IMR-90 (cell line): ENCODE measurements at regions of chr17 and their contacts with region 1.

Region 1: DNA sequence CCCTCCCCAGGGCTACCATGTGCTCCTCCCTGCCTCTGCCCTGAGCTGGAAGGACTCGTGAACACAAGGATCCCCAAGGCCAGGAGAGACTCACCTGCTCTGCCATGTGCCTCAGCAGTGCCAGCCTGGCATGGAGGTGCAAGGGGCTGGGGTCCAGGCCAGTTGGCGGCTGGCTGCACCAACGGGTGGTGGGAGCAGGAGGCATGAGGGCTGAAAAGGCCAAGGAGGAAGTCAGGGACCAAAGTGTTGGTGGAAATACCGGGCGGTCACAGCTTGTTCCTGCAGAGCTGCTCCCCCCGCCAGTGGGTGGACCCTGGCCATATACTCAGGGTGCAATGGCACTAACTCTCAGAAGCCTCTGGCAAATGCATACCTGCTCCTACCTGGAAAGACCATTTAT is 7.4 kb upstream of the MRPL38 start:
- DNase-seq: no peak
- ATAC-seq: no peak
- H3K4me3 ChIP-seq: no peak overlapping the region
- H3K27ac ChIP-seq: no peak overlapping the region
- H3K4me1 ChIP-seq: no peaks in the 10 kb centered on the region
- H3K27me3 ChIP-seq: no peaks in the 10 kb centered on the region
- CTCF ChIP-seq: no peak
- POLR2A ChIP-seq: no peak
- RAD21 ChIP-seq: no peak

Region 2: DNA sequence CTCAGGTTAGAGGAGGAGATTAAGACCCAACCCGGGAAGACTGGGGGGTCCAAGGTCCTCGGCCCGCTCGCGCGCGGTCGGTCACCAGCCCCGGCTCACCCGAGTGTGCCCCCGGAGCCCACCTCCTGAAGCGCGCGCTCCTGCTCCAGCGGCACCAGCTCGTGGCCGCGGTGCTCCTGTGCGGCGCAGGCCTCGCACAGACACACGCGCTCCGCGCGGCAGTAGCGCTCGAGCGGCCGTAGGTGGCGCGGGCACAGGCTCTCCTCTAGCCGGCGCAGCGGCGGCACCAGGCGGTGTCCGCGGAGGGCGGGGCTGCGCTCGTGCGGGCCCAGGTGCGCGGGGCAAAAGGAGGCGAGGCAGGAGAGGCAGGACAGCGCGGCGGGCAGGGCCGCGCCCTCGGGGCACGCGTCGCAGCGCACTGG is 34.3 kb before region 1 on chr17:
- CTCF ChIA-PET with region 1: no interaction called
- POLR2A ChIA-PET with region 1: no interaction called
- dilution Hi-C with region 1: no loop called
- in situ Hi-C with region 1: no loop called
- intact Hi-C with region 1: no loop called
- DNase-seq: peak; percentile 71
- ATAC-seq: peak; percentile 74
- H3K4me3 ChIP-seq: peak overlapping the region; percentile 46
- H3K27ac ChIP-seq: peak overlapping the region; percentile 75
- H3K4me1 ChIP-seq: peaks cover 21% of the 10 kb centered on the region
- H3K27me3 ChIP-seq: peaks cover 3% of the 10 kb centered on the region
- CTCF ChIP-seq: peak; percentile 60
- POLR2A ChIP-seq: peak; percentile 32; the same call in 1 of the 2 replicates
- RAD21 ChIP-seq: peak; percentile 30

Region 3: DNA sequence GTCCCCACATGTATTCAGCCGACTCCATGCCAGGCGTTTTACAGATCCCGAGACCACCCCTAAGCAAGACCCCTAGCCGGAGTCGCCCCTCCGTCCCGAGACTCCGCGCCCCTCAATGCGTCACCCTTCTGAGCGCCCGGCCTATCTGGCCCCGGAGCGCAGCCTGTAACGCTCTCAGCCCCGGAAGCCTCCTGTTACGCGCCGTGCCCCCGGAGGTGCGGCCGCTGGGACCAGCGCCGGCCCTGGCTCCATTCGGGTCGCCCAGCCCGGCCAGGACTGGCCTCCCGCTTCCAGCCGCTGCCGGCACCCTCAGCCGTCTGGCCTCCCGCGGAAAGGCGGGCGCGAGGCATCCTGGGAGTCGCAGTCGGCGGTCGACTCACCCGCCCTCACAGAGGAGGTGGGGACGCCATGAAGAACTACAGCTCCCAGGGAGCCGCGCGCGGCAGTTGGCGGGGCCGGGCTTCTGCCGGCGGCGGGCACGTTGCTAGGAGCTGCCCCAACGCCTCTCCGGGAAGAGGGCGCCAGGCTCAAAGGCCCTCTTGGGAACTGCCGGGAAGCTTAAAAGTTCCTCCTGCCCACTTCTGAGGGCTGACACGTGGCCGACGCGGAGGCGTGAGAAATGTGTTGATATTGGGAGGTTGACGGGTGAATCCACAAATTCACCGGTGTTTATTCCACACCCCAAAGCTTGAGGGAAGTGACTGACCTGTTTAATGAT is 28.8 kb after region 1 on chr17 and contains the start of gene FBF1:
- CTCF ChIA-PET with region 1: no interaction called
- POLR2A ChIA-PET with region 1: interaction called, 11 read pairs
- dilution Hi-C with region 1: no loop called
- in situ Hi-C with region 1: no loop called
- intact Hi-C with region 1: loop called (anchors 5 kb)
- DNase-seq: peak; percentile 90
- ATAC-seq: peak; percentile 99
- H3K4me3 ChIP-seq: peak within 1 kb of the TSS; percentile 72
- H3K27ac ChIP-seq: peak within 1 kb of the TSS; percentile 57
- H3K4me1 ChIP-seq: peaks cover 3% of the 10 kb centered on the region; the same call in 1 of the 2 replicates
- H3K27me3 ChIP-seq: no peaks in the 10 kb centered on the region
- CTCF ChIP-seq: no peak
- POLR2A ChIP-seq: peak; percentile 93
- RAD21 ChIP-seq: no peak
- total RNA-seq, gene FBF1: 4.5 and 5.3 TPM in 2 replicates